Calu3 (cell line): ENCODE measurements at regions of chr7 and their contacts with region 1.

Region 1: GRCh38 chr7:104791080-104791479 is 222.9 kb upstream of the KMT2E start:
- DNase-seq: peak; percentile 15
- H3K4me3 Mint-ChIP-seq: no peak overlapping the region
- H3K27ac Mint-ChIP-seq: no peak overlapping the region
- H3K4me1 Mint-ChIP-seq: peaks cover 22% of the 10 kb centered on the region
- H3K27me3 Mint-ChIP-seq: peaks cover 3% of the 10 kb centered on the region
- CTCF ChIP-seq: no peak

Region 2: GRCh38 chr7:104694710-104695109 is 96.4 kb before region 1 on chr7:
- CTCF ChIA-PET with region 1: no interaction called
- intact Hi-C with region 1: no loop called
- DNase-seq: no peak
- H3K4me3 Mint-ChIP-seq: no peak overlapping the region
- H3K27ac Mint-ChIP-seq: no peak overlapping the region
- H3K4me1 Mint-ChIP-seq: no peaks in the 10 kb centered on the region
- H3K27me3 Mint-ChIP-seq: peaks cover 27% of the 10 kb centered on the region
- CTCF ChIP-seq: no peak

Region 3: DNA sequence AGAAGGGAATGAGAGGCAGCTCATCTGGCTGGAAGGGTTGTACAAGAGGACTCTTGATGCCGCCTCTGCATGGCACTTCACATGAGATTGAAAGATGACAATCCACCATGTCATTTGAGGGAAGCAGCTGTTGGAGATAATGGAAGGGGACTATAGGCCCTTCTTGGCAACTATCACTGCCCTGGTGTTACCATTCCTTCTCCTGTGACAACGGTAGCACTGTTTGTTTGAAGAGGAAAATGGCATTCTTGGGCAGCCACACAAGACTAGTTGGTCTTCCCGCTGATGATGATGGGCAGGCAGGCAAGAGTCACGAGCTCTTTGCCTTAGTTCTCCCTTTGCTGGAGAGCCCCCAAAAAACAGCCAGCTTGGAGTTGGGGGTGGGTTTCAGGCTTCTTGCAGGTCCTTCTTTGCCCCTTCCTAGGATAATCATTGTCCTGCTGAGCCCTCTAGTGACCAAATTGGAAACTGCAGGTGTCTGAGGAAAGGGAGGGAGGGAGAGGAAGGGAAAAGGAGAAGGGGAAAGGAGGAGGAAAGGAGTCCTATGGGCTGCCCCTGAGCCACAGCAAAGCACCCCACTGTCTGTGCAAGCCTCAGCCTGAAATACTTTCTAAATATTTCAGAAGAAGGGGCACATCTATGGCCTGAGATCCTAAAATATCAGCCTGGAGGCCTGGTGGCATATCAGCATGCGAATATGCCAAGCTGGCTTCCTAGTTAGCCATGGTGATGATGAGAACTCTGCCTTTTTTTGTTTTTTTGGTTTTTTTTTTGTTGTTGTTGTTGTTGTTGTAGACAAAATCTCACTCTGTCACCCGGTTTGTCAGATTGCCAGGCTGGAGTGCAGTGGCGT is 57.3 kb after region 1 on chr7:
- CTCF ChIA-PET with region 1: no interaction called
- intact Hi-C with region 1: no loop called
- DNase-seq: peak; percentile 51
- H3K4me3 Mint-ChIP-seq: no peak overlapping the region
- H3K27ac Mint-ChIP-seq: no peak overlapping the region
- H3K4me1 Mint-ChIP-seq: no peaks in the 10 kb centered on the region
- H3K27me3 Mint-ChIP-seq: peaks cover 31% of the 10 kb centered on the region
- CTCF ChIP-seq: peak; percentile 85

Region 4: GRCh38 chr7:105531792-105532671 is 741.0 kb after region 1 on chr7 and contains the start of gene RINT1:
- CTCF ChIA-PET with region 1: no interaction called
- intact Hi-C with region 1: loop called (anchors 10 kb)
- DNase-seq: peak; percentile 95
- H3K4me3 Mint-ChIP-seq: peak within 1 kb of the TSS; percentile 82
- H3K27ac Mint-ChIP-seq: peak within 1 kb of the TSS; percentile 76
- H3K4me1 Mint-ChIP-seq: peaks cover 20% of the 10 kb centered on the region
- H3K27me3 Mint-ChIP-seq: no peaks in the 10 kb centered on the region
- CTCF ChIP-seq: peak; percentile 43
- total RNA-seq, gene RINT1: 17.1 and 18.6 TPM in 2 replicates